Mucosa of descending colon (tissue), 3 donors: ENCODE measurements at regions of chr11 and their contacts with region 1.

Region 1: DNA sequence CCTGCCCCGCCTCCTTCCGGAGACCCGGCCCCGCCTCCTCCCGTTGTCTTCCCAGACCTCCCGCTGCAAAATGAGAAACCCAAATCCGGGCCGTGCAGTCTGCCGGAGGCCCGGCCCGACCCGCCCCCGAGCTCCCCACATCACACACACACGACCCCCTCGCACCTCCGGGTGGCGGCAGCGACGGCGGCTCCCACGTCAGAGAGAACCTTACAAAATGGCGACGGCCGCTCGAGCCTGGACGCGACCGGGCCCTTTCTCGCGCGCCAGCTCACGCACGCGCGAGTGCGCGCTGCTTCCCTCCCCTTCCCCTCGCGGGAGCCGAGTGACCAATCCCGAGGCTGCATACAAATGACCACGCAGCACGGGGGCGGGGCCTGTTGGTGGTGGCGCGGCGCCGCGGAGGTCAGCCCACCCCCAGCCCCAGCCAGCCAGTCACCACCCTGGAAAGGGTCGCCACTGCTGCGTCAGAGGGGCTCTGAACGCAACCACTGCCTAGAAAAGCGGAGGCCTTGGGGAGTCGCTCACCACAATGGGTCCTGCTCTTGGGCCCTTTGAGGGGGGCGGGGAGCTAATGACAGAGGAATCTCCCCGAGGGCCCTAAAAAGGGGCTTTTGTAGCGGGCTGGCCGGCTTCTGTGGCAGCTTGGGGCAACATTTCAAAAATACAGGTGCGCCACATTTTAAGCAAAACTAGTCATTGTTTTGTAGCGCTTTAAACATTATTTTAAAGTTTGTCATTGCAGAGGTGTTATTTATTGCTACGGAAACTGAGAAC is at the start of gene RBM4B:
- DNase-seq: peak; percentile 97
- ATAC-seq: peak; percentile 97
- H3K4me3 ChIP-seq: peak within 1 kb of the TSS; percentile 25
- H3K4me1 ChIP-seq: peaks cover 18% of the 10 kb centered on the region
- CTCF ChIP-seq: no peak
- total RNA-seq, gene RBM4B: 16.7 to 22.7 (median 16.7) TPM

Region 2: GRCh38 chr11:66418168-66418985 is 259.4 kb before region 1 on chr11:
- intact Hi-C with region 1: loop called (anchors 10 kb)
- DNase-seq: peak in 2 of 3 donors; percentile 68 to 74
- ATAC-seq: peak; percentile 19
- H3K4me3 ChIP-seq: no peak overlapping the region
- H3K4me1 ChIP-seq: peaks cover 4% of the 10 kb centered on the region
- CTCF ChIP-seq: no peak

Region 3: GRCh38 chr11:66579017-66579606 is 98.7 kb before region 1 on chr11:
- intact Hi-C with region 1: loop called (anchors 5 kb)
- DNase-seq: peak; percentile 67 to 84 (median 83)
- ATAC-seq: peak; percentile 87
- H3K4me3 ChIP-seq: no peak overlapping the region
- H3K4me1 ChIP-seq: no peaks in the 10 kb centered on the region
- CTCF ChIP-seq: peak; percentile 50